H1 (cell line): ENCODE measurements at regions of chr9 and their contacts with region 1.

Region 1: DNA sequence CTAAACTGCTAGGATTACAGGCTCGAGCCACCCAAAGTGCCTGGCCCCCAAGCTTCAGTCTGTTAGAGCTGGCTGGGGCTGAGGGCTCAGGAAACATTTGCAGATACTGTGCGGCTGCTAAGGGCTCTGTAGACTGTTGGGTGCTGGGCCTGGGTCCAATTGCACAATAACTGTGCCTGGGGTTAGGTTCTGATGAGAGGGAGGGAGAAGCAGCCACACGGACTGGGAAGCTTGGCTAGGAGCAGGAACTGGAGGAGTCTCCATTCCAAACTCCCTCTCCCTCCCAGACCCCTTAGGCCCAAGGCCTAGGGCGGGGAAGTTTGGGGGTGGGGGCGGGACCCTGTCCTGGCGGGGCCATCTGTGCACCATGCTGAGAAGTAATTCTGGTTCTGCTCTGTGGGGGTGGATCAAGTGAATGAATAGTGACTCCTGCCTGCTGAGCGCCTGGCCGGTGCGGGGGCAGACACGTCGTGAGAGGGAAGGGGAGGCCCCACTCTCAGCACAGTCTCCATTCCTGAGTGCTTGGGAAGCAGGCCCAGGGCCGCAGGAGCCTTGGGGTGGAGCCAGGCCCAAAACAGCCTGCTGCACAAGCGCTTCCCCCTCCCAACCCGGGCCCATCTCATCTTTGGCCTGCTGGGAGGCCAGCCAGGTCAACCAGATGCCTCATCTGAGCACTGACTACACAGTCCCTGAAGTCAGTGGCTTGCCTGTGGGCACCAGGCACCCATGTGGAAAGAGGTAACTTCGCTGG is 1.5 kb downstream of the ASS1 start:
- DNase-seq: peak in 1 of 2 experiments; percentile 67
- H3K4me3 ChIP-seq: peak overlapping the region in 3 of 4 experiments; percentile 64 to 77 (median 66); a peak in 6 of 8 replicates
- H3K27ac ChIP-seq: no peak overlapping the region
- H3K4me1 ChIP-seq: peaks cover 8 to 39% (median 35%) of the 10 kb centered on the region in 4 experiments
- H3K27me3 ChIP-seq: peaks cover 0 to 11% (median 7%) of the 10 kb centered on the region in 4 experiments; a peak in 3 of 7 replicates
- CTCF ChIP-seq: no peak
- EP300 ChIP-seq: no peak
- POLR2A ChIP-seq: no peak
- RAD21 ChIP-seq: no peak

Region 2: GRCh38 chr9:130421802-130422276 is 24.4 kb before region 1 on chr9:
- CTCF ChIA-PET with region 1: interaction called, 7 read pairs
- POLR2A ChIA-PET with region 1: interaction called, 31 read pairs
- DNase-seq: peak in 1 of 2 experiments; percentile 65
- H3K4me3 ChIP-seq: no peak overlapping the region
- H3K27ac ChIP-seq: no peak overlapping the region
- H3K4me1 ChIP-seq: peaks cover 6 to 15% (median 9%) of the 10 kb centered on the region in 4 experiments; a peak in 6 of 7 replicates
- H3K27me3 ChIP-seq: no peaks in the 10 kb centered on the region
- CTCF ChIP-seq: no peak
- EP300 ChIP-seq: 0 out of 3 replicates have a peak, but pooled peaks of 1 of the 2 experiments have one; percentile 14
- POLR2A ChIP-seq: no peak
- RAD21 ChIP-seq: no peak

Region 3: DNA sequence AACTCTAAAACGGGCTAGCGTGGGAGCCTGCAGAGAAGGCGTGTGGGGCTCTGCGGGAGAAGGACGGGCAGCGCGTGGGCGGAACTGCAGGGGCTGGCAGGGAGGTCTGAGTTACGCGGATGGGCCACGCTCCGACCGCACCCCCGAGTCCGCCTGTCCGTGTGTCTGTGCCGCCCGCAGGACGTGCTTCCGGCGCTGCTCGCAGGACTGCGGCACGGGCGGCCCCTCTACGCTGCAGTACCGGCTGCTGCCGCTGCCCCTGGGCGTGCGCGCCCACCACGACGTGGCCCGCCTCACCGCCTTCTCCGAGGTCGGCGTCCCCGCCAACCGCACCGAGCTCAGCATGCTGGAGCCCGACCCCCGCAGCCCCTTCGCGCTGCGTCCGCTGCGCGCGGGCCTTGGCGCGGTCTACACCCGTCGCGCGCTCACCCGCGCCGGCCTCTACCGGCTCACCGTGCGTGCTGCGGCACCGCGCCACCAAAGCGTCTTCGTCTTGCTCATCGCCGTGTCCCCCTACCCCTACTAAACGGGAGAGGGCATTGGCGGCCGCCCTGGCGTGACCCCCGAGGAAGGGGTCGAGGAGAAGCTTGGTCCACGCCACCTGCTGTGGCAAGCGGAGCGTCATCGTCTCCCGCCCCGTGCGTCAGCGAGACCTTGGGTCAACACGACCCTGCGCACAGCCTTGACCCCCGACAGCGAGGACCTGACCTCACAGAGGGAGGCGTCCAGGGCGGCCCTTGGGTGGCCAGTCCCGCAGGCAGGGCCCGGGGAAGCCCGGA is 12.9 kb before region 1 on chr9:
- CTCF ChIA-PET with region 1: interaction called, 10 read pairs
- POLR2A ChIA-PET with region 1: interaction called, 12 read pairs
- DNase-seq: peak in 1 of 2 experiments; percentile 85
- H3K4me3 ChIP-seq: peak overlapping the region; percentile 6 to 62 (median 38)
- H3K27ac ChIP-seq: no peak overlapping the region
- H3K4me1 ChIP-seq: peaks cover 0 to 20% (median 11%) of the 10 kb centered on the region in 4 experiments; a peak in 6 of 7 replicates
- H3K27me3 ChIP-seq: peaks cover 1 to 27% (median 20%) of the 10 kb centered on the region in 4 experiments; a peak in 6 of 7 replicates
- CTCF ChIP-seq: peak in 2 of 3 experiments; percentile 48 to 66; a peak in 3 of 4 replicates
- EP300 ChIP-seq: no peak
- POLR2A ChIP-seq: no peak
- RAD21 ChIP-seq: peak; percentile 32 to 40; a peak in 3 of 4 replicates